BJ (cell line): ENCODE measurements at regions of chr17 and their contacts with region 1.

Region 1: GRCh38 chr17:29111816-29112499 is 68.2 kb downstream of the MYO18A start:
- DNase-seq: no peak
- H3K4me3 ChIP-seq: no peak overlapping the region
- H3K27me3 ChIP-seq: no peaks in the 10 kb centered on the region
- CTCF ChIP-seq: peak; percentile 99

Region 2: DNA sequence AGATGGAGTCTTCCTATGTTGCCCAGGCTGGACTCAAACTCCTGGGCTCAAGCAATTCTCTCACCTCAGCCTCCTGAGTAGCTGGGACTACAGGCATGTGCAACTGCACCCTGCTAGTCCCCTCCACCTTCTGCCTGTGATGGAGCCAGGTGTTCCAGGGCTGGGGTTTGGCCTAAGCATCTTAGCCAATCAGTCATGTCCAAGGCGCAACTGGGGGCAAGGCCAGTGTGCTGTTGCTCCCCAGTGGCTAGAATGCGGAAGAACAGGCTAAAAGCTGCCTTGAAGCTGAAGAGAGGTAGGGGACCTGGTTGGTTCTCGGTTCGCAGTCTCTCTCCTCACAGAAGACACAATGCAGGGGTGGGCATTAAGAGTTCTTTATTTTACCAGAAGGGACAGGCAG is 233.0 kb before region 1 on chr17:
- CTCF ChIA-PET with region 1: no interaction called
- POLR2A ChIA-PET with region 1: no interaction called
- DNase-seq: no peak
- H3K4me3 ChIP-seq: no peak overlapping the region
- H3K27me3 ChIP-seq: no peaks in the 10 kb centered on the region
- CTCF ChIP-seq: peak; percentile 59

Region 3: GRCh38 chr17:28967221-28968140 is 144.5 kb before region 1 on chr17:
- CTCF ChIA-PET with region 1: interaction called, 432 read pairs
- POLR2A ChIA-PET with region 1: no interaction called
- DNase-seq: no peak
- H3K4me3 ChIP-seq: no peak overlapping the region
- H3K27me3 ChIP-seq: peaks cover 9% of the 10 kb centered on the region
- CTCF ChIP-seq: no peak

Region 4: GRCh38 chr17:28973425-28973824 is 138.5 kb before region 1 on chr17:
- CTCF ChIA-PET with region 1: interaction called, 139 read pairs
- POLR2A ChIA-PET with region 1: no interaction called
- DNase-seq: no peak
- H3K4me3 ChIP-seq: no peak overlapping the region
- H3K27me3 ChIP-seq: peaks cover 27% of the 10 kb centered on the region
- CTCF ChIP-seq: peak; percentile 31; the same call in 1 of the 2 replicates

Region 5: DNA sequence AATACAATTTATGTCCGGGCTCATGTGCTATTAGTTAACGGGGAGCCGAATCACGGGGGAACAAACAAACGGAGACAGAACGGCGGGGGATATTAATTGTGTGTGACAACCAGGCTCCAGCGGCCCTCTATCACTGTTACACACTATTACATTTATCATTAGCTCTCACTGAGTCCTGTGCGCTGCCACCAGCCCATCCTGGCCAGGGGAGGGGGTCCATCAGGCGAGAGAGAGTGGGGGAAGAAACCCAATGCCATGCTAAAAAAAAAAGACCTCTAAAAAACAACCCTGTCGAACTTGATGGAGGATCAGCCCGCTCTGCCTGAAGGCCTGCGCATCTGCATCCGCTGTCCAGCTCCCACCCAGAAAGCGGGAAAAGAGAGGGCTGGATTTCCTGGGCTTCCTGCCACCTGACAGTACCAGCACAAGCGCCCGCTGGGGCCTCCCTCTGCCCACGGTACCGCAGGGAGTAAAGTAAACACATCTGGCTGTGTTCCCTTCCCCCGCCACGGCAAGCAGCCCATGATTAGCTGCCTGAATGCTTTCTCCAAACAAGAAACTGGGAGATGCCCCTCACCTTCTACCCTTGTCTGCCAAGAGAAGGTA is 27.3 kb before region 1 on chr17:
- CTCF ChIA-PET with region 1: interaction called, 18 read pairs
- POLR2A ChIA-PET with region 1: no interaction called
- DNase-seq: no peak
- H3K4me3 ChIP-seq: no peak overlapping the region
- H3K27me3 ChIP-seq: no peaks in the 10 kb centered on the region
- CTCF ChIP-seq: no peak

Region 6: GRCh38 chr17:29124117-29124924 is 12.4 kb after region 1 on chr17:
- CTCF ChIA-PET with region 1: interaction called, 130 read pairs
- POLR2A ChIA-PET with region 1: no interaction called
- DNase-seq: no peak
- H3K4me3 ChIP-seq: no peak overlapping the region
- H3K27me3 ChIP-seq: no peaks in the 10 kb centered on the region
- CTCF ChIP-seq: peak; percentile 79